ENCODE measurements at regions of chrX and their contacts with region 1.

Region 1: GRCh38 chrX:49155900-49156837 is 6.4 kb upstream of the MAGIX start:
- DNase-seq: no peak
- H3K4me3 ChIP-seq: peak overlapping the region; percentile 53
- CTCF ChIP-seq: peak; percentile 76

Region 2: GRCh38 chrX:48617542-48618340 is 538.4 kb before region 1 on chrX:
- CTCF ChIA-PET with region 1: no interaction called
- POLR2A ChIA-PET with region 1: no interaction called
- DNase-seq: no peak
- H3K4me3 ChIP-seq: no peak overlapping the region
- CTCF ChIP-seq: no peak

Region 3: GRCh38 chrX:49137492-49137891 is 18.7 kb before region 1 on chrX:
- CTCF ChIA-PET with region 1: interaction called, 11 read pairs
- POLR2A ChIA-PET with region 1: no interaction called
- DNase-seq: no peak
- H3K4me3 ChIP-seq: no peak overlapping the region
- CTCF ChIP-seq: no peak

Region 4: GRCh38 chrX:49829016-49829415 is 672.8 kb after region 1 on chrX and contains the start of gene PAGE4:
- CTCF ChIA-PET with region 1: no interaction called
- POLR2A ChIA-PET with region 1: no interaction called
- DNase-seq: no peak
- H3K4me3 ChIP-seq: no peak within 1 kb of the TSS
- CTCF ChIP-seq: no peak